Heart right ventricle (tissue), 16 donors: ENCODE measurements at regions of chr6 and their contacts with region 1.

Region 1: DNA sequence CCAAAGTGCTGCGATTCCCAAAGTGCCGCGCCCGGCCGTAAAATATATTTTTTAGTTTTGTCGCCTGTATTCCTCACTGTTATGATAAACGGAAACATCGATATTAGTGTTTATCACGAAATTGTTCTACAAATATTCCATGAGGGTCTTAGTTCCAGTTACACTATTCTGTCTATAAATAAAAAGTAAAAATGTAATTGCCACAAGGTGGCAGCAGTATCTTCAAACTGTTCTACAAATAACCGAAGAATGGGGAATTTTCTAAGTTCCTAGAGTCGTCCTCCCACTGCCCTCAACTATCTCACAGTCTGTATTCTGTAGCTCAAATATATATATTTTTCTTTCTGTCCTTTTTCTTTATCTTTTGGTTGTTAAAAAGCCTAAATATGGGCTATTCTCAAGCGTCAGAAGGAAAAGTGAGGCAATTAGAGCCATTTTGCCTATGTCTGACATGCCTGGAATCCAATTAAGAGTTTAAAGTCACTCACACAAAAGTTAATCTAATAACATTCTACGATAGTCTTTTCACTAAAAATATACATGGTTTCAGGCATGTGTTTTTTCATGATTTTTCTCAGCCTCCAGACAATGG is 14.2 kb upstream of the FAM162B start:
- DNase-seq: no peak
- ATAC-seq: no peak
- H3K4me3 ChIP-seq: peak overlapping the region in 1 of 10 donors; percentile 27
- H3K27ac ChIP-seq: no peak overlapping the region
- H3K4me1 ChIP-seq: peaks cover 0 to 6% (median 0%) of the 10 kb centered on the region in 9 donors
- H3K27me3 ChIP-seq: peaks cover 0 to 17% (median 3%) of the 10 kb centered on the region in 7 donors
- CTCF ChIP-seq: peak in 8 of 9 donors; percentile 16 to 66 (median 55)

Region 2: GRCh38 chr6:116381010-116381409 is 398.7 kb before region 1 on chr6:
- intact Hi-C with region 1: no loop called
- DNase-seq: no peak
- ATAC-seq: no peak
- H3K4me3 ChIP-seq: no peak overlapping the region
- H3K27ac ChIP-seq: no peak overlapping the region
- H3K4me1 ChIP-seq: peaks cover 0 to 39% (median 8%) of the 10 kb centered on the region in 9 donors
- H3K27me3 ChIP-seq: no peaks in the 10 kb centered on the region
- CTCF ChIP-seq: no peak

Region 3: GRCh38 chr6:116485559-116486184 is 294.0 kb before region 1 on chr6:
- intact Hi-C with region 1: no loop called
- DNase-seq: no peak
- ATAC-seq: no peak
- H3K4me3 ChIP-seq: no peak overlapping the region
- H3K27ac ChIP-seq: no peak overlapping the region
- H3K4me1 ChIP-seq: no peaks in the 10 kb centered on the region
- H3K27me3 ChIP-seq: no peaks in the 10 kb centered on the region
- CTCF ChIP-seq: no peak

Region 4: DNA sequence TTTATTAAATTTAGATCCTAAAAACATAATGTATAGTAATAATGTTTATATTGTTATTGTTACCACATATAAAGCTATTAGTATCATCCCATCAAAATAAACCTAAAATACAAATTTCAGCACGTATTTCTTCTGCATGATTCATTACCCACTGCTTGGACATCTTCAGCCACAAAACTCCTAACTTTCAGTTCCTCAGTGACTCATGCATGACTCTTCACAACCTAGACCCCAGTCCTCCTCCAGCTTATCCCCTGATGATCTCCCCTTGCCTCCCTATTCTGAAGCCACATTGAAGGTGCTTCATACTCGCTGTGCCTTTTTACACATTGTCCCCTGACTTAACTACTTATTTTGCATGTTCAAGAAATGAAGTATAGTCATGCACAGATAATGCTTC is 60.4 kb after region 1 on chr6:
- intact Hi-C with region 1: loop called in 4 of 10 experiments (anchors 5 to 10 kb)
- DNase-seq: no peak
- ATAC-seq: no peak
- H3K4me3 ChIP-seq: no peak overlapping the region
- H3K27ac ChIP-seq: no peak overlapping the region
- H3K4me1 ChIP-seq: no peaks in the 10 kb centered on the region
- H3K27me3 ChIP-seq: no peaks in the 10 kb centered on the region
- CTCF ChIP-seq: no peak

Region 5: GRCh38 chr6:116847227-116847626 is 67.6 kb after region 1 on chr6:
- intact Hi-C with region 1: loop called in 4 of 10 experiments (anchors 5 to 10 kb)
- DNase-seq: no peak
- ATAC-seq: peak in 3 of 8 donors; percentile 42 to 55 (median 49)
- H3K4me3 ChIP-seq: no peak overlapping the region
- H3K27ac ChIP-seq: no peak overlapping the region
- H3K4me1 ChIP-seq: peaks cover 0 to 4% (median 0%) of the 10 kb centered on the region in 9 donors
- H3K27me3 ChIP-seq: no peaks in the 10 kb centered on the region
- CTCF ChIP-seq: peak in 7 of 9 donors; percentile 6 to 48 (median 36)

Region 6: GRCh38 chr6:117317261-117317660 is 537.6 kb after region 1 on chr6:
- intact Hi-C with region 1: loop called in 1 of 10 experiments (anchors 10 kb)
- DNase-seq: no peak
- ATAC-seq: no peak
- H3K4me3 ChIP-seq: no peak overlapping the region
- H3K27ac ChIP-seq: no peak overlapping the region
- H3K4me1 ChIP-seq: no peaks in the 10 kb centered on the region
- H3K27me3 ChIP-seq: no peaks in the 10 kb centered on the region
- CTCF ChIP-seq: peak; percentile 15 to 57 (median 36)